ENCODE measurements at regions of chr5 and their contacts with region 1.

Region 1: GRCh38 chr5:79514391-79515105 is 614 bp upstream of the HOMER1 start:
- DNase-seq: peak; percentile 76 to 97 (median 87)
- ATAC-seq: peak; percentile 85
- H3K4me3 ChIP-seq: peak overlapping the region; percentile 79
- H3K4me3 Mint-ChIP-seq: peak overlapping the region; percentile 98
- H3K27ac ChIP-seq: peak overlapping the region; percentile 69 to 89
- H3K27ac Mint-ChIP-seq: peak overlapping the region; percentile 96
- H3K4me1 ChIP-seq: peaks cover 19% of the 10 kb centered on the region
- H3K4me1 Mint-ChIP-seq: peaks cover 41% of the 10 kb centered on the region
- H3K27me3 ChIP-seq: peaks cover 5 to 15% of the 10 kb centered on the region in 2 experiments
- H3K27me3 Mint-ChIP-seq: peaks cover 34% of the 10 kb centered on the region
- CTCF ChIP-seq: no peak

Region 2: DNA sequence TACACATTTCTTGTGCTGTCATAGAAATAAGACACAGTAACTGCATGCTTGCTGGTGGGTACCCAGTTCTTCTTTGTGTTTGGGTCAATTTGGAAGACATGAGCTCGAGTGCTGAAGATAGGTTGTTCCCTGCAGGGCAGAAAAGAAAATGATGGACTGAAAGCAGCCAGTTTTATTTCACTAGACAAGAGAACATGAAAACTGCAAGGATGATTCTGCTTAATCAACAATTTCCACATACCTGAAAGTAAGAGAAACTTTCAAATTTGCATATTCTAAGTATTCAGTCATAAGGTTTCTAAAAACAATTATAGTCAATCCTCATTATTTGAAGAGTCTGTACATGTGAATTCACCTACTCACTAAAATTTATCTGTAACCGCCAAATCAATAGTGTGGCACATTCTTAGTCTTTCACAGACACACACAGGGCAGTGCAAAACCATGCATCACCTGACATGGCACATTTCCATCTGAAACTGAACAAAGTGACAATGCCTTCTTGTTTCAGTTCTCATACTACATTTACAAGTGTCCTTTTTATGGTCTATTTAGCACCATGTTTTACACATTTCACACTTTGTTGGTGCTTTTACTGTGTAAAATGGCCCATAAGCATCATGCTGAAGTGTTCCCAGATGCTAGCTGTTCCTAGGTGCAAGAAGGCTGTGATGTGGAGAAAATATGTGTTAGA is 57.5 kb before region 1 on chr5:
- CTCF ChIA-PET with region 1: no interaction called
- POLR2A ChIA-PET with region 1: no interaction called
- intact Hi-C with region 1: no loop called
- DNase-seq: no peak
- ATAC-seq: no peak
- H3K4me3 ChIP-seq: no peak overlapping the region
- H3K4me3 Mint-ChIP-seq: no peak overlapping the region
- H3K27ac ChIP-seq: no peak overlapping the region
- H3K27ac Mint-ChIP-seq: no peak overlapping the region
- H3K4me1 ChIP-seq: no peaks in the 10 kb centered on the region
- H3K4me1 Mint-ChIP-seq: no peaks in the 10 kb centered on the region
- H3K27me3 ChIP-seq: no peaks in the 10 kb centered on the region
- H3K27me3 Mint-ChIP-seq: no peaks in the 10 kb centered on the region
- CTCF ChIP-seq: no peak

Region 3: GRCh38 chr5:79982136-79982535 is 467.6 kb after region 1 on chr5:
- CTCF ChIA-PET with region 1: no interaction called
- POLR2A ChIA-PET with region 1: no interaction called
- intact Hi-C with region 1: loop called in 1 of 2 experiments (anchors 10 kb)
- DNase-seq: no peak
- ATAC-seq: no peak
- H3K4me3 ChIP-seq: no peak overlapping the region
- H3K4me3 Mint-ChIP-seq: peak overlapping the region; percentile 3
- H3K27ac ChIP-seq: no peak overlapping the region
- H3K27ac Mint-ChIP-seq: peak overlapping the region; percentile 73
- H3K4me1 ChIP-seq: peaks cover 5% of the 10 kb centered on the region
- H3K4me1 Mint-ChIP-seq: peaks cover 29% of the 10 kb centered on the region
- H3K27me3 ChIP-seq: no peaks in the 10 kb centered on the region
- H3K27me3 Mint-ChIP-seq: no peaks in the 10 kb centered on the region
- CTCF ChIP-seq: no peak

Measured in CD4-positive, alpha-beta T cell (primary cell).